ENCODE measurements at regions of chr3 and their contacts with region 1.

Region 1: GRCh38 chr3:16102905-16103364 is 71.5 kb upstream of the GALNT15 start:
- DNase-seq: peak; percentile 95
- ATAC-seq: peak; percentile 86
- H3K4me3 ChIP-seq: no peak overlapping the region
- H3K27ac ChIP-seq: peak overlapping the region; percentile 96
- H3K4me1 ChIP-seq: peaks cover 14% of the 10 kb centered on the region
- H3K27me3 ChIP-seq: no peaks in the 10 kb centered on the region
- CTCF ChIP-seq: peak; percentile 30
- POLR2A ChIP-seq: no peak; the same call in 1 of the 2 replicates
- RAD21 ChIP-seq: peak; percentile 38; the same call in 1 of the 2 replicates

Region 2: GRCh38 chr3:16048435-16049318 is 54.3 kb before region 1 on chr3:
- CTCF ChIA-PET with region 1: interaction called, 8 read pairs
- POLR2A ChIA-PET with region 1: no interaction called
- dilution Hi-C with region 1: no loop called
- in situ Hi-C with region 1: no loop called
- intact Hi-C with region 1: loop called (anchors 5 kb)
- DNase-seq: peak; percentile 81
- ATAC-seq: peak; percentile 94
- H3K4me3 ChIP-seq: no peak overlapping the region; the same call in 1 of the 2 replicates
- H3K27ac ChIP-seq: peak overlapping the region; percentile 28; the same call in 1 of the 2 replicates
- H3K4me1 ChIP-seq: peaks cover 12% of the 10 kb centered on the region
- H3K27me3 ChIP-seq: no peaks in the 10 kb centered on the region
- CTCF ChIP-seq: peak; percentile 93
- POLR2A ChIP-seq: peak; percentile 67
- RAD21 ChIP-seq: peak; percentile 100

Region 3: GRCh38 chr3:16060358-16060852 is 42.5 kb before region 1 on chr3:
- CTCF ChIA-PET with region 1: no interaction called
- POLR2A ChIA-PET with region 1: interaction called, 5 read pairs
- dilution Hi-C with region 1: no loop called
- in situ Hi-C with region 1: no loop called
- intact Hi-C with region 1: loop called (anchors 1 kb)
- DNase-seq: peak; percentile 100
- ATAC-seq: peak; percentile 79
- H3K4me3 ChIP-seq: no peak overlapping the region
- H3K27ac ChIP-seq: peak overlapping the region; percentile 95
- H3K4me1 ChIP-seq: peaks cover 33% of the 10 kb centered on the region
- H3K27me3 ChIP-seq: no peaks in the 10 kb centered on the region
- CTCF ChIP-seq: peak; percentile 45
- POLR2A ChIP-seq: peak; percentile 43; the same call in 1 of the 2 replicates
- RAD21 ChIP-seq: peak; percentile 54

Region 4: GRCh38 chr3:16069149-16069922 is 33.6 kb before region 1 on chr3:
- CTCF ChIA-PET with region 1: no interaction called
- POLR2A ChIA-PET with region 1: no interaction called
- dilution Hi-C with region 1: no loop called
- in situ Hi-C with region 1: no loop called
- intact Hi-C with region 1: loop called (anchors 1 kb)
- DNase-seq: peak; percentile 97
- ATAC-seq: peak; percentile 65
- H3K4me3 ChIP-seq: no peak overlapping the region
- H3K27ac ChIP-seq: peak overlapping the region; percentile 90
- H3K4me1 ChIP-seq: peaks cover 36% of the 10 kb centered on the region
- H3K27me3 ChIP-seq: no peaks in the 10 kb centered on the region
- CTCF ChIP-seq: no peak
- POLR2A ChIP-seq: no peak
- RAD21 ChIP-seq: no peak; the same call in 1 of the 2 replicates

Region 5: DNA sequence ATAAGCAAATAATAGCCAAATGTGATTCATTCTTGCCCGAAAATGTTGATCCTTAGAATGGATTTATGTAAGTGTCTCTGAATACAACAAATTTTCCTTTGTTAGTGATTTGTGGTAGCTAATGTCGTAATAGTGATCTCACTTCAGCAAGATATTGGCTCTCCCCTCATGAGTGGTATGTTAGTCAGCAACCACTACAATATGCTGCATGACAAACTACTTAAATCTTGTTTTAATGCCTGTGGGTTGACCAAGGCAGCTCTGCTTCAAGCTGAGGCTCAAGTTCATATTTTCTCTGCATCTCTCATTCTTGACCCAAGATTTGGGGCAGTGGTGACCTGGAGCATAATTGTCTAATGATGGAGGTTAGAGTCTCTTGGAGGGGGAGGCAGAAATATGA is 21.7 kb after region 1 on chr3:
- CTCF ChIA-PET with region 1: no interaction called
- POLR2A ChIA-PET with region 1: no interaction called
- dilution Hi-C with region 1: no loop called
- in situ Hi-C with region 1: no loop called
- intact Hi-C with region 1: loop called (anchors 1 kb)
- DNase-seq: peak; percentile 100
- ATAC-seq: peak; percentile 87
- H3K4me3 ChIP-seq: no peak overlapping the region
- H3K27ac ChIP-seq: peak overlapping the region; percentile 97
- H3K4me1 ChIP-seq: peaks cover 35% of the 10 kb centered on the region
- H3K27me3 ChIP-seq: no peaks in the 10 kb centered on the region
- CTCF ChIP-seq: no peak
- POLR2A ChIP-seq: no peak; the same call in 1 of the 2 replicates
- RAD21 ChIP-seq: peak; percentile 2

Region 6: DNA sequence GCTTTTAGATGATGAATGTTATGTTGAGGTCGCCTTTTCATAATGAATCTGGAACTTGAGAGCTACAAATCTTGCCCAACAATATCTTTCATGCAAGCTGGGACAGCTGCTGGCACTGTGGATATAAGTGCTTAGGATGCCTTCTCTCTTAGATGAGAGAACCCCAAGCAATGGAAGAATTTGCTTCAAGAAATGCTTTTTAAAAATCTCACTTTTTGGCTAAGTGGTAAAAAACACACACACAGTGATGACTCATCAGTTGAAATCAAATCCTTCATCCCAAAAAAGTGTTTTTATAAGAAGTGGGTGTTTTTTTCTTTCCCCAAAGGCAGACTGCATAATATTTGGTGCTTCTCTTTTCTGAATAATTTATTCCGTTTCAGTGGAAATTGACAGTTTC is 33.1 kb after region 1 on chr3:
- CTCF ChIA-PET with region 1: no interaction called
- POLR2A ChIA-PET with region 1: no interaction called
- dilution Hi-C with region 1: no loop called
- in situ Hi-C with region 1: no loop called
- intact Hi-C with region 1: loop called (anchors 5 kb)
- DNase-seq: peak; percentile 77
- ATAC-seq: peak; percentile 41
- H3K4me3 ChIP-seq: no peak overlapping the region
- H3K27ac ChIP-seq: peak overlapping the region; percentile 98; the same call in 1 of the 2 replicates
- H3K4me1 ChIP-seq: peaks cover 23% of the 10 kb centered on the region
- H3K27me3 ChIP-seq: no peaks in the 10 kb centered on the region
- CTCF ChIP-seq: no peak
- POLR2A ChIP-seq: no peak
- RAD21 ChIP-seq: no peak

Region 7: DNA sequence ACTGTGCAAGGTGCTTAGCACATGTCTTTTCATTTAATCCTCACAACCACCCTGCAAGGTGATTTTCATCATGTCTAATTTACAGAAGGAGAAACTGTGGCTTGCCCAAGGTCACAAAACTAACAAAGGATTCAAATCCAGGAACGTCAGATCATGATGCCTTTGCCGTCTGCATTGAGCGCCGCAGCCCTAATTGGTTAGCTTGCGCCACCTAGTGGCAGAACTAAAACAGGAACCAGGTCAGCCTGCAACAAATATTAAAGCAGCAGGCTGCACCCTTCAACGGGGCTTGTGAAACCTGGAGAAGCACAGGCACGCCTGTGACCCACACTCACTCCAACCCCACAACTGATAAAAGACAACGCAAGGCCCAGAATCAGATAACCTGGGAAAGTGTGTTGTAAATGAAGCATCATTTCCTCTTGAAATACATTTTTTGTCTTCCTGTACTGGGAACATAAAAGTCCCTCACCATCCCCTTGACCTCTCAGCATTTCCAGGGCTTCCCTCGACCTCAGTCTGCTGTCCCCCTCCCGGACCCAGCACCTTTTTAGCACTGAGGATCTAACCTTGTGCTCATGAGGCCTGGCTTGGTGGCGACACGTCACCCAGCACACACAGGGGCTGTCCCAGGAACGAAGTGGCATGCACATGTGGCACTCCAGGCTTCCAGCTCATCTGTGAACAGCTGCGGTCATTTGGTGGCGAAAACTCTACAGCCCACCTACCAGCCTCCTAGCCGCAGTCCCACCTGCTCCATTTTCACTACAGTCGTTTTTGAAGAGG is 144.5 kb after region 1 on chr3:
- CTCF ChIA-PET with region 1: no interaction called
- POLR2A ChIA-PET with region 1: no interaction called
- dilution Hi-C with region 1: no loop called
- in situ Hi-C with region 1: no loop called
- intact Hi-C with region 1: loop called (anchors 2 kb)
- DNase-seq: peak; percentile 84
- ATAC-seq: peak; percentile 88
- H3K4me3 ChIP-seq: no peak overlapping the region
- H3K27ac ChIP-seq: no peak overlapping the region
- H3K4me1 ChIP-seq: peaks cover 13% of the 10 kb centered on the region
- H3K27me3 ChIP-seq: no peaks in the 10 kb centered on the region
- CTCF ChIP-seq: peak; percentile 96
- POLR2A ChIP-seq: peak; percentile 50
- RAD21 ChIP-seq: peak; percentile 99